ENCODE measurements at regions of chr1 and their contacts with region 1.

Region 1: DNA sequence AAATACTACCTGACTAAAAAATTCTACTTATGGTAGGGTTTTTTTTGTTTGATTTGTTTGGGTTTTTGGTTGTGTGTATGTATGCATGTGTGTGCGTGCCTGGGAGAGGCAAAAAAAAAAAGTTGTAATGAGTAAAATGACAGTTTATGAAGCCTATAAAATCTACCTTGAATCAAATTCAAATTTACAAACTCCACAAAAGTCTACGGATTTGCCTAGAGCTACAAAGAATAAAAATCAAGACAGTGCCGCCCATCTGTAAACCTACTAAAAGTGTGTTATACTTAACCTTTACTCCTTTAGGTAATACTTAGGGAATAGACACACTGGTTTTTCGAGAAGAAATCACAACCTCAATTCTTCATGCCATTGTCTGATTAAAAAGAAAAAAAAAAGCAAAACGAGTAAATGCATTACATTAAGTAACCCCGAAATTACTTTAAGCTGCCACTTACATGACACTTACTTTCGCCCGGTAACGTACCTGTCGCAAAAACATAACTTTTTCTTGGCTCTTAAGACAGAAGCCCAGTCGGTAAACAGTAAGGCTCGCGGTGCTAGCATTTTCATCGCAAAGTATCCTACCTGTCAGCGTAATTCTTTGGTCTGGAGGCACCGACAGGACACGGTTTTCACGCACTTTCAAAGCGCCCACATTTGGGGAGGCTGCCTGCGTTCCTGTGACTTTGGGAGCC is 1.0 kb downstream of the SYDE2 start:
- DNase-seq: no peak
- H3K4me3 ChIP-seq: peak overlapping the region; percentile 92 to 97 (median 96)
- H3K27ac ChIP-seq: peak overlapping the region; percentile 97 to 99 (median 98)
- H3K4me1 ChIP-seq: peaks cover 11 to 45% (median 32%) of the 10 kb centered on the region in 4 donors
- H3K27me3 ChIP-seq: no peaks in the 10 kb centered on the region
- CTCF ChIP-seq: no peak
- EP300 ChIP-seq: no peak
- POLR2A ChIP-seq: no peak

Region 2: GRCh38 chr1:85259118-85259911 is 59.5 kb after region 1 on chr1 and contains the start of gene C1orf52:
- intact Hi-C with region 1: loop called (anchors 5 kb)
- DNase-seq: peak; percentile 99
- H3K4me3 ChIP-seq: peak within 1 kb of the TSS; percentile 73 to 96 (median 82)
- H3K27ac ChIP-seq: peak within 1 kb of the TSS; percentile 71 to 91 (median 85)
- H3K4me1 ChIP-seq: peaks cover 24 to 52% (median 48%) of the 10 kb centered on the region in 4 donors
- H3K27me3 ChIP-seq: no peaks in the 10 kb centered on the region
- CTCF ChIP-seq: peak in 2 of 3 experiments; percentile 99 to 100
- EP300 ChIP-seq: no peak
- POLR2A ChIP-seq: peak; percentile 67
- total RNA-seq, gene C1orf52: 11.2 to 22.4 (median 15.4) TPM